Activated naive CD4-positive, alpha-beta T cell treated with anti-CD3 and anti-CD28 coated beads for 36 hours (primary cell): ENCODE measurements at regions of chr1 and their contacts with region 1.

Region 1: GRCh38 chr1:24541711-24542346 is 14.1 kb upstream of the NCMAP start:
- DNase-seq: peak; percentile 64
- H3K4me3 Mint-ChIP-seq: peak overlapping the region; percentile 6
- H3K27ac Mint-ChIP-seq: peak overlapping the region; percentile 92
- H3K4me1 Mint-ChIP-seq: peaks cover 73% of the 10 kb centered on the region
- H3K27me3 Mint-ChIP-seq: no peaks in the 10 kb centered on the region

Region 2: DNA sequence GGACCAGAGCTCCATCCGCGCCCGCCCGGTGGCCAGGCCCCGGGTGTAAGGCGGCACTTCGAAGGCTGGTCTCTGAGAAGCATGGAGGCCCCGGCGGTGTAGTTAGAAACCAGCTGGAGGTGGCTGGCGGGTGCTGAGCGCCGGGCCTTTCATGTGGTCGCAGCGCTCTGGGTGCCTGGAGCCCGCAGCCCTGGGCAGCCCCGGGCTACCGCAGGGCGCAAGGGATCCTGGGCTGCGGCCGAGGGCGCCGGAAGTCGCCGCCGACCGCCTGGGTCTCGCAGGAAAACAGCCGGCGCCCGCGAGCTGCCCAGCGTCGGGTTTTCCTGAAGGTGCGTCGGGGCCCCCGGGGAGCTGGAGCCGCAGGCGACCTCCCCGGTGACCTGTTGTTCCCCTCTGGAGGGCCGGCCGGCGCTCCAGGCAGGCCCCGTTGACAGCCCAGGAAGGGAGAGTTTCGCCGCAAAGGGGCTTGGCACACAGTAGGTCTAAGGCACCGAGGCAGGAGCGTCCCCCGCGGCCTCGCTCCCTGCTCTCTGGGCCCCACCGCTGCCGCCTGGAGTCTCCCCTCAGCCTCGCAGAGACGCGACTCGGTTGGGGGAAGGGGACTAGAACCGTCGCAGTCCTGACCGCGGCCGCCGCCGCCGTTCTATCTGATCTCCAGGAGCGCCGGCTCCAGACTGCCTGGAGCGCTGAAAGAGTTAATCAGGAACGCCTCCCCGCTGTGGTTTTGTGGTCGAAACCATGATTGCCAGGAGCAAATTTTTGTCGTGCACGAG is 219.9 kb before region 1 on chr1:
- CTCF ChIA-PET with region 1: no interaction called
- intact Hi-C with region 1: loop called (anchors 5 kb)
- DNase-seq: peak; percentile 88
- H3K4me3 Mint-ChIP-seq: peak overlapping the region; percentile 67
- H3K27ac Mint-ChIP-seq: no peak overlapping the region
- H3K4me1 Mint-ChIP-seq: peaks cover 41% of the 10 kb centered on the region
- H3K27me3 Mint-ChIP-seq: peaks cover 73% of the 10 kb centered on the region

Region 3: GRCh38 chr1:24502709-24503058 is 39.1 kb before region 1 on chr1 and contains the start of gene RCAN3:
- CTCF ChIA-PET with region 1: no interaction called
- intact Hi-C with region 1: loop called (anchors 1 kb)
- DNase-seq: peak; percentile 87
- H3K4me3 Mint-ChIP-seq: peak within 1 kb of the TSS; percentile 100
- H3K27ac Mint-ChIP-seq: peak within 1 kb of the TSS; percentile 93
- H3K4me1 Mint-ChIP-seq: peaks cover 49% of the 10 kb centered on the region
- H3K27me3 Mint-ChIP-seq: no peaks in the 10 kb centered on the region
- total RNA-seq, gene RCAN3: 70.8 to 71.9 TPM

Region 4: GRCh38 chr1:24635195-24635843 is 93.5 kb after region 1 on chr1:
- CTCF ChIA-PET with region 1: interaction called, 7 read pairs
- intact Hi-C with region 1: loop called (anchors 1 kb)
- DNase-seq: no peak
- H3K4me3 Mint-ChIP-seq: no peak overlapping the region
- H3K27ac Mint-ChIP-seq: no peak overlapping the region
- H3K4me1 Mint-ChIP-seq: peaks cover 11% of the 10 kb centered on the region
- H3K27me3 Mint-ChIP-seq: no peaks in the 10 kb centered on the region

Region 5: DNA sequence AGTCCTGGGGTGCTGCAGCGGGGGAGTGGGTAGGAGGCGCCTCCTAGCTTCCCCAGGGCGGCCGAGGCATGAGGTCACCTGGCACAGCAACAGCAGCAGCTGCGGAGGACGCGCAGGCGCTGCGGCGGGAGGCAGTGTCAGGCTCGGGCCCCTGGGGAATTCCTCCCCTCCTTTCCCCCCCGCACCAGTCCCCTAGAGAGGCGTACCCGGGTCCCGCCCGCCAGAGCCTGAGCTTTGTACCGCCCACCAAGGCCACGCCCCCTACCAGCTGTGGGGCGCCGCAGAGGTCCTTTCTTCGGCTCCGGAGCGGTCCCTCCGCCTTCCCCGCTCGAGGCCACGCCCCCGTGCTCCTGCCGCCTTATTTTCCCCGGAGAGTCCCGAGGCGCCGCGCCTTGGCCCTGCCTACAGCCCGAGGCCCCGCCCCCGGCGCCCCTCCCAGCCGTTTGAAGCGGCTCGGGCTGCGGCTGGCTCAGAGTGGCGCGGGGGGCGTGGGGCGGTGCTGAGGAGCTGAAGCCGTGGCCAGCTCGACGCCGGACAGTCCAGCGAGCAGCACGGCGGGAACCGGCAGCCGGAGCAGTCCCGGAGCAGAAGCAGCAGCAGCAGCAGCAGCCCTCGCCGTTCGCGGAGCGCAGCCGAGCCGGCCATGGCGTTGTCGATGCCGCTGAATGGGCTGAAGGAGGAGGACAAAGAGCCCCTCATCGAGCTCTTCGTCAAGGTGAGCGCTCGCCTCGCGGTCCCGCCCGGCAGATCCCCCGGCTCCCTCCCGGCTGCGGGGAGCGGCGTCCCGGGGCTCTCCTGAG is 203.3 kb after region 1 on chr1 and contains the start of gene CLIC4:
- CTCF ChIA-PET with region 1: no interaction called
- intact Hi-C with region 1: loop called (anchors 2 kb)
- DNase-seq: peak; percentile 100
- H3K4me3 Mint-ChIP-seq: peak within 1 kb of the TSS; percentile 88
- H3K27ac Mint-ChIP-seq: peak within 1 kb of the TSS; percentile 77
- H3K4me1 Mint-ChIP-seq: peaks cover 52% of the 10 kb centered on the region
- H3K27me3 Mint-ChIP-seq: no peaks in the 10 kb centered on the region
- total RNA-seq, gene CLIC4: 38.0 to 44.3 TPM